Mammary epithelial cell (primary cell): ENCODE measurements at regions of chr1 and their contacts with region 1.

Region 1: DNA sequence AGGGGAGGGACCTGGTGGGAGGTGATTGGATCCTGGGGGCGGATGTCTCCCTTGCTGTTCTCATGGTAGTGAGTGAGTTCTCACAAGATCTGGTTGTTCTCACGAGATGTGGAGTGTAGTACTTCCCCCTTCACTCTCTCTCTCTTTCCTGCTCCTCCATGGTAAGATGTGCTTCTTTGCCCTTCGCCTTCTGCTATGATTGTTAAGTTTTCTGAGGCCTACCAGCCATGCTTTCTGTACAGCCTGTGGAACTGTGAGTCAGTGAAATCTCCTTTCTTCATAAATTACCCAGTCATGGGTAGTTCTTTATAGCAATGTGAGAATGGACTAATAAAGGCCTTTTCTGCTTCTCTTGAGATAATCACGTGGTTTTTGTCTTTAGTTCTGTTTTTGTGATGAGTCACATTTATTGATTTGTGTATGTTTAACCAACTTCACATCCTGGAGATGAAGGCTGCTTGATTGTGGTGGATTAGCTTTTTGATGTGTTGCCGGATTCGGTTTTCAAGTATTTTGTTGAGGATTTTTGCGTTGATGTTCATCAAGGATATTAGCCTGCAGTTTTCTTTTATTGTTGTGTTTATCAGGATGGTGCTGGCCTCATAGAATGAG is 45.5 kb downstream of the RABGAP1L start:
- DNase-seq: no peak
- H3K4me3 ChIP-seq: no peak overlapping the region
- H3K27ac ChIP-seq: no peak overlapping the region
- H3K4me1 ChIP-seq: peaks cover 3% of the 10 kb centered on the region
- H3K27me3 ChIP-seq: no peaks in the 10 kb centered on the region
- CTCF ChIP-seq: no peak

Region 2: DNA sequence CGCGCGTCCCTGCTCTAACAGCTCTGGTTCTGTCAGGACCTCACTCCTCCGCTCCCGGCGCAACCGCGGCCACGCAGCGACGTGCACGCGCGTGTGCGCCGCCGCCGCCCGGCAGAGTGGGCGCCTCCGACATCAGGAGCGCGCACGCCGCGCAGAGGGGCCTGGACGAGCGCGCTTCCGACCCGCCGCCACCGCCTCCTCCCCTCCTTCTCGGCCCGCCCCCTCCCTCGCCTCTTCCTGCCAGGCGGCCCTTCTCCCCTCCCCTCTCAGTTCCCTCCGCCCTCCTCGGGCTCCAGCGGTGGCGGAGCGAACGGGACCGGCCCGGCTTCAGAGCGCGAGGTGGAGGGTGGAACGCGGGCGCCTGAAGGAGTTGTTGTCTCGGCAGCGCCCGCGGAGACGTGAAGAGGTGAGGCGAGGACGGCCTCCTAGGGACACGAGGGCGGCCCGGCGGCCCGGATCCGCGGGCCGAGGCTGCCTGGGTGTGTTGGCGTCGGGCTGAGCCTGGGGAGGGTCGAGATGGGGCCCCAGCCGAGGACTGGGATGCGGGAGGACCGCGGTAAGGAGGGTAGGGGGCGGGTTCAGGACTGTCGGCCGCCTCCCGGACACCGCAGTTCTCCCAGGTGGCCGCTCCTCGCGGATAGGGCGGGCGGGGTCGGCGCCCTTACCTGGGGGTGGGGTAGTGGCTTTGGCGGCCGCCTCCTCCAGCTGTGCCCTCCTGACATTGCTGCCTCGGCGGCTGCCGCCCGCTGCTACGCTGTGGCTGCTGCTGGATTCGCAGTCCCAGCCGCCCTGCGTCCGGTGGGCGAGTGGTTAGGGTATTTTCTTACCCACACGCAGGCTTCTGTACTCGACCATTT is 45.3 kb before region 1 on chr1 and contains the start of gene RABGAP1L:
- CTCF ChIA-PET with region 1: no interaction called
- dilution Hi-C with region 1: no loop called
- in situ Hi-C with region 1: no loop called
- intact Hi-C with region 1: loop called (anchors 5 kb)
- DNase-seq: peak; percentile 94
- H3K4me3 ChIP-seq: peak within 1 kb of the TSS; percentile 84 to 94 (median 91)
- H3K27ac ChIP-seq: peak within 1 kb of the TSS; percentile 78
- H3K4me1 ChIP-seq: peaks cover 34% of the 10 kb centered on the region
- H3K27me3 ChIP-seq: no peaks in the 10 kb centered on the region
- CTCF ChIP-seq: no peak
- total RNA-seq, gene RABGAP1L: 31.9 to 47.5 TPM